ENCODE measurements at regions of chr2 and their contacts with region 1.

Region 1: DNA sequence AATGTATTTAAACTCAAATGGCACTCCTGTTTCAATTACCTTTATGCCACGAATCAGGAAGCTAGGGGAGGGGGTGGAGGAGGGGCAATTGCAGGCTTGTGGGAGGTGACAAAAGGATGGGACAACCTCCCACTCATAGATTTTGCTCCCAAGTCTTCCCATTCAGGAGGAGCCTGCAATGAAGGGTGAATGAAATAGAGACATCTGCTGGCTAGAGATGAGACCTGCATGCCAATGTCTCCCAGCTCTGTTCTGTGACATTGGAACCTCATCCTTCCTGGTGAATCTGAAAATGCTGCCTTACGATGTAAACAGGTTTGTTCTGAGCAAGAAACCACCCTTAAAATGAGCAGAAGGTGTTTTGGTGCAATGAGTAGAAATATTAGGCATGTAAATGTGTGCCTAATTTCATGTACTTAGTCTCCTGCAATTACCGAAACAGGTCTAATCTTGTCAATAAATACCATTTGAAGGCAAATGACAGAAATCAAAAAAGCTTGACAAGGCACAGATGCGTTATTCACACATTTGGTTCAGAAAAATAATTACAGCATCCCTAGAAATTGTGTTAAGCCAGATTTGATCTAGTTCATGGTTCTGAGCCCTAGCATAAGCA is 2.7 kb upstream of the PID1 start:
- DNase-seq: peak; percentile 56 to 84 (median 73)
- H3K4me3 ChIP-seq: peak overlapping the region in 2 of 4 donors; percentile 29 to 42
- H3K27ac ChIP-seq: no peak overlapping the region
- H3K4me1 ChIP-seq: peaks cover 0 to 19% of the 10 kb centered on the region in 2 donors
- H3K27me3 ChIP-seq: no peaks in the 10 kb centered on the region
- CTCF ChIP-seq: peak; percentile 73 to 93 (median 87)
- POLR2A ChIP-seq: no peak

Region 2: DNA sequence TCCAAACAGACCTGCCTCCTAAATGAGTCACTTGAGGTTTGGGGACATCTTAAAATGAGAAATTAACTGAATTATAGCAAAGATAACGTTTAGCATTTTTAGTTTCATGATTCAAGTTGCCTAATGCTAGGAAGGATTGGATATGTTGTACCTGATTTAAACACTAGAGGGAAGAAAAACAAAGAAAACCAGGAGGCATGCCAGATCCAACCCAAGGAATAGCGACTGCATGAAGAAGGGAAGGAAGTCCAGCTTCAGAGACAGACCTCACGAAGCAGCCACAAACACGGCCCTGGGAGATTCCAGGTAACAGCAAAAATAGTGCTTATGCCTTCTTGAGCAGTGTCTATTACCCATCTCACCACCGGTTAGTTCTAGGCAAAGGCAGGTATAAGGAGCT is 592.4 kb before region 1 on chr2:
- intact Hi-C with region 1: loop called in 1 of 2 experiments (anchors 10 kb)
- DNase-seq: peak in 4 of 7 donors; percentile 36 to 60 (median 50)
- H3K4me3 ChIP-seq: no peak overlapping the region
- H3K27ac ChIP-seq: no peak overlapping the region
- H3K4me1 ChIP-seq: peaks cover 0 to 9% of the 10 kb centered on the region in 2 donors
- H3K27me3 ChIP-seq: no peaks in the 10 kb centered on the region
- CTCF ChIP-seq: peak; percentile 39 to 70 (median 68)
- POLR2A ChIP-seq: no peak

Region 3: DNA sequence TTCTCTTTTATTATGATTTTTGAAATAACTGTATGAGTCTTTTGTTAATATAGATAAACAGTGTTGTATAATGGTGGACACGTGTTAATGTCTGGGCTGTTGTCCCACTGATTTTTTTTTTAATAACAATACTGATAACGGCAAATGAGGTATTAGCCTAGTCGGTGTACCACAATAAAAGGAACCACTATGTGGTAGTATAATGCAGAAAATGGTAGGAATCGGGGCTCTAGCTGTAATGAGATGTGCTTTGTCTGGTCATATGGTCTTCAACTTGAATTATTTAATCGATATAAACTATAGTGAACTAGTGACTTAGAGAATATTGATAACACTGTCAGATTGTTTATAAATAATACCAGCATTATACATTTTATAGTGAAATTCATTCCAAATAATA is 574.4 kb before region 1 on chr2:
- intact Hi-C with region 1: loop called in 1 of 2 experiments (anchors 10 kb)
- DNase-seq: no peak
- H3K4me3 ChIP-seq: no peak overlapping the region
- H3K27ac ChIP-seq: no peak overlapping the region
- H3K4me1 ChIP-seq: no peaks in the 10 kb centered on the region
- H3K27me3 ChIP-seq: no peaks in the 10 kb centered on the region
- CTCF ChIP-seq: peak in 5 of 6 experiments; percentile 24 to 53 (median 45)
- POLR2A ChIP-seq: no peak

Region 4: GRCh38 chr2:228875152-228875900 is 398.5 kb before region 1 on chr2:
- intact Hi-C with region 1: no loop called
- DNase-seq: no peak
- H3K4me3 ChIP-seq: no peak overlapping the region
- H3K27ac ChIP-seq: no peak overlapping the region
- H3K4me1 ChIP-seq: no peaks in the 10 kb centered on the region
- H3K27me3 ChIP-seq: no peaks in the 10 kb centered on the region
- CTCF ChIP-seq: no peak
- POLR2A ChIP-seq: no peak

Region 5: DNA sequence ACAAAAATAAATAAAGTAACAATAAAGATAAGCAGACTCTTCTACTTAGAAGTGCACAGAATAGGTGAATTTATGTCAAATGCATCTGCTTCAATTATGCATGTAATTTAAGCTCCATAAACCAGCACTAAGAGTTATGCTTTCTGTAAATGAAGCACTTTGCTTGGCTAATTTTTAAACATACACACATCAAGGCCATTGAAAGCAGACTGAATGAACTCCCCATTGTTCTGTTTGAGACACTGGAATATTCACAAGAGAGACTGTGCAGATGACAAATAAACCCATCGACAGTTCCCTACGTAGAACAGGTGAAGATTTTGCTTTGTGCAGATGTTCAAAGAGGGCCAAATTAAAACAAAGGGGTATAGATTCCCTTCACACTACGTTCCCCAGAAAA is 136.2 kb before region 1 on chr2:
- intact Hi-C with region 1: loop called (anchors 5 kb)
- DNase-seq: no peak
- H3K4me3 ChIP-seq: no peak overlapping the region
- H3K27ac ChIP-seq: no peak overlapping the region
- H3K4me1 ChIP-seq: peaks cover 6 to 21% of the 10 kb centered on the region in 2 donors
- H3K27me3 ChIP-seq: no peaks in the 10 kb centered on the region
- CTCF ChIP-seq: no peak
- POLR2A ChIP-seq: no peak

Region 6: GRCh38 chr2:229431327-229431954 is 157.6 kb after region 1 on chr2:
- intact Hi-C with region 1: no loop called
- DNase-seq: no peak
- H3K4me3 ChIP-seq: no peak overlapping the region
- H3K27ac ChIP-seq: peak overlapping the region in 3 of 5 donors; percentile 15 to 42 (median 17)
- H3K4me1 ChIP-seq: peaks cover 4 to 10% of the 10 kb centered on the region in 2 donors
- H3K27me3 ChIP-seq: no peaks in the 10 kb centered on the region
- CTCF ChIP-seq: peak; percentile 43 to 74 (median 58)
- POLR2A ChIP-seq: no peak

Measured in adrenal gland (tissue), 19 donors.